HCT116 (cell line): ENCODE measurements at regions of chr13 and their contacts with region 1.

Region 1: DNA sequence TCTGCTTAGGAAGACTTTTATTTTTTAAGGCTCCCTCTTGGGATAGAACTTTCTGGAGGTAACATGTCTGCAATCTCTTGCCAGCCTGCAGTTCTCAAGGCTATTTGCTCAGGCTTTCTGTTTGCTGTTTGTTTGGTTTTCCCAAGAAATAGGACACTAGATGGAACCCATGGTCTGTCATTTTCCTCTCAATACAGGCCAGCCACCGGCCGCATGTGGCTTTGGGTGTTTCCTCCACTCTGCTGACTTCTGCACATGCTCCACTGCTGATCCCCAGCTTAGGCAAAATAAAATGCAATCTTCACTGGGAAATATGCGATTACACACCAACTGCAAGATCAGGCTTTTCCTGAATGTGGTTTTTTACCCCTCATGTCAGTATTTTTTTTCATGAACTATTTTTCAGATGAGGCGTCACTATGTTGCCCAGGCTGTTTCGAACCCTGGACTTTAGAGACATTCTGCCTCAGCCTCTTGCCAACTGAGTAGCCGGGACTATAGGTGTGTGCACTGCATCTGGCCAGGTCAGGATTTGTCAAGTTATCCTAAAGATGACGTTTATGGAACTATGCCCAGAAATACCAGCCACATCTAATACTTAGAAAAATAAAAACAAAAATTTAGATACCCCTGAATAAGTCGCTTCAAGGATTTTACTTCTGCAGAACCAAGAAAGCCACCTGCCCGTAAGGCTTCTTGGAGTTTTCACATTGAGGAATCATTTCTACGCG is 94.3 kb upstream of the PABPC3 start:
- DNase-seq: no peak
- ATAC-seq: no peak
- H3K4me3 ChIP-seq: peak overlapping the region in 1 of 2 experiments; percentile 29; a peak in 1 of 4 replicates
- H3K27ac ChIP-seq: no peak overlapping the region
- H3K4me1 ChIP-seq: peaks cover 5 to 14% of the 10 kb centered on the region in 2 experiments; a peak in 3 of 4 replicates
- H3K27me3 ChIP-seq: no peaks in the 10 kb centered on the region
- CTCF ChIP-seq: no peak
- POLR2A ChIP-seq: no peak
- RAD21 ChIP-seq: no peak

Region 2: GRCh38 chr13:25037057-25037813 is 35.6 kb after region 1 on chr13:
- CTCF ChIA-PET with region 1: interaction called, 22 read pairs
- POLR2A ChIA-PET with region 1: no interaction called
- RAD21 ChIA-PET with region 1: interaction called in 1 of 2 experiments, 3 read pairs
- intact Hi-C with region 1: loop called (anchors 1 kb)
- DNase-seq: peak; percentile 55
- ATAC-seq: peak; percentile 99
- H3K4me3 ChIP-seq: no peak overlapping the region
- H3K27ac ChIP-seq: no peak overlapping the region
- H3K4me1 ChIP-seq: no peaks in the 10 kb centered on the region
- H3K27me3 ChIP-seq: peaks cover 9% of the 10 kb centered on the region; the same call in 1 of the 2 replicates
- CTCF ChIP-seq: peak; percentile 62 to 83 (median 81)
- POLR2A ChIP-seq: no peak
- RAD21 ChIP-seq: peak; percentile 58

Region 3: DNA sequence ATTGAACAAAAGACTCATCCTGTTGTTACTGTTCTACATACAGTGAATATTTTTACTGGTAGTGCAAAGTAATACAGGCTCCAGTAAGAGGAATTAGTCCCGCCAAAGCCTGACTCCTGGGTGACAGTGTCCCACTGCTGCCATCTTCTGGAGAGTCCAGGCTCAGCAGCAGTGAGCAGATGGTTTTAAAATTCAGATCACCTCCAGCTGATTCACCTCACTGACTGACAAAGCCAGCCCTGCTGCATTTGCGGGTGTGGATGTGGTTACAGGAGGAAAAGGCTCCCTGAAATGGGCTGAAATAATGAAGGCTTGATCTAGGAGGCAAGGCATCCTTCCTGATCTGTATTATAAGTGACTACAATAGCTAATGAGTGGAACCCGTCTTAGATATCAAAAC is 112.6 kb after region 1 on chr13:
- CTCF ChIA-PET with region 1: interaction called, 43 read pairs
- POLR2A ChIA-PET with region 1: no interaction called
- RAD21 ChIA-PET with region 1: interaction called, 3 to 4 read pairs
- intact Hi-C with region 1: loop called (anchors 1 kb)
- DNase-seq: peak; percentile 59
- ATAC-seq: peak; percentile 99
- H3K4me3 ChIP-seq: no peak overlapping the region
- H3K27ac ChIP-seq: no peak overlapping the region
- H3K4me1 ChIP-seq: no peaks in the 10 kb centered on the region
- H3K27me3 ChIP-seq: no peaks in the 10 kb centered on the region
- CTCF ChIP-seq: peak; percentile 61 to 95 (median 93); a peak in 5 of 6 replicates
- POLR2A ChIP-seq: no peak
- RAD21 ChIP-seq: peak; percentile 69

Region 4: GRCh38 chr13:25375727-25376358 is 374.2 kb after region 1 on chr13:
- CTCF ChIA-PET with region 1: interaction called, 3 read pairs
- POLR2A ChIA-PET with region 1: no interaction called
- RAD21 ChIA-PET with region 1: no interaction called
- intact Hi-C with region 1: loop called (anchors 5 kb)
- DNase-seq: peak; percentile 31
- ATAC-seq: peak; percentile 84
- H3K4me3 ChIP-seq: no peak overlapping the region
- H3K27ac ChIP-seq: no peak overlapping the region
- H3K4me1 ChIP-seq: no peaks in the 10 kb centered on the region
- H3K27me3 ChIP-seq: no peaks in the 10 kb centered on the region
- CTCF ChIP-seq: peak; percentile 44 to 66 (median 63); a peak in 5 of 6 replicates
- POLR2A ChIP-seq: no peak
- RAD21 ChIP-seq: peak; percentile 53